ENCODE measurements at regions of chr12 and their contacts with region 1.

Region 1: DNA sequence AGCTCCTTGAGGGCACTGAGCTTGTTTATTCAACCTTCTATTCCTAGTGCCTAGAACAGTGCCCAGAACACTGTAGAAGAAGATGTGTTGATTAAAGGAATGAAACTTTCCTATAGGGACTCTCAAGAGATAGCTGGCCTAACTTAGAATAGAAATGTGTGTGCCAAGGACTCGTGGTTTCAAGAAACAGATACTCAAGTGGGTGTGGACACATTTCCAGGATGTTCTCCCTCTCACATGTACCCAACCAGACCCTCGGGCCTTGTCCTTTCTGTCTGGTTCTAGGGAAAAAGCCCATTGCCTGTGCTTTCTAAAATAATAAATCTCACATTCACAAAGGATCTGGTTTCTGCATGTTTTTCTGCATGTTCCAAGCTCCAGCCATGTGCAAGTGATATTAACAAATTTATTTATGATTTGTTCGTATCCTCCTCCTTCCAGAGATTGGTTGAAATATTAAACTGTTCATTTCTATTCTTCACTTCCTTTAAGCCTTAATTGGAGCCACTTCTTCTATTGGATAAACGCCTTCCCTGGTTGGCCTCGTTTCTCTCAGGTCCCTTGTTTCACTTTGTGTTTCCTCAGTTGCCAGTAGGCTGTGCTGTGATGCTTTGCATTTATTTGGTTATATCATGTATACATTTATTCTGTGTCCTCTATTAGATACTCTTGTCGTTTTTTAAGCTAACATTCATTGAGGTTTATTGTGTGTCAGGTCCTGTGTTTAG is 89.8 kb downstream of the CRADD start:
- DNase-seq: peak in 1 of 2 donors; percentile 72
- H3K4me3 ChIP-seq: peak overlapping the region; percentile 5 to 26
- H3K27ac ChIP-seq: peak overlapping the region; percentile 6 to 31
- H3K4me1 ChIP-seq: peaks cover 3 to 4% of the 10 kb centered on the region in 2 donors
- H3K27me3 ChIP-seq: no peaks in the 10 kb centered on the region
- CTCF ChIP-seq: peak; percentile 42 to 65 (median 59)

Region 2: GRCh38 chr12:93502802-93503623 is 263.9 kb before region 1 on chr12:
- intact Hi-C with region 1: loop called (anchors 5 kb)
- DNase-seq: peak in 1 of 2 donors; percentile 67
- H3K4me3 ChIP-seq: no peak overlapping the region
- H3K27ac ChIP-seq: no peak overlapping the region
- H3K4me1 ChIP-seq: no peaks in the 10 kb centered on the region
- H3K27me3 ChIP-seq: no peaks in the 10 kb centered on the region
- CTCF ChIP-seq: peak; percentile 57 to 81 (median 75)